ENCODE measurements at regions of chr17 and their contacts with region 1.

Region 1: GRCh38 chr17:47465165-47465564 is 65.7 kb upstream of the NPEPPS start:
- DNase-seq: no peak
- ATAC-seq: no peak
- H3K4me3 ChIP-seq: no peak overlapping the region
- H3K4me3 Mint-ChIP-seq: no peak overlapping the region
- H3K27ac ChIP-seq: no peak overlapping the region
- H3K27ac Mint-ChIP-seq: no peak overlapping the region
- H3K4me1 ChIP-seq: no peaks in the 10 kb centered on the region
- H3K4me1 Mint-ChIP-seq: no peaks in the 10 kb centered on the region
- H3K27me3 ChIP-seq: no peaks in the 10 kb centered on the region
- H3K27me3 Mint-ChIP-seq: no peaks in the 10 kb centered on the region
- CTCF ChIP-seq: no peak

Region 2: GRCh38 chr17:47335101-47335936 is 129.8 kb before region 1 on chr17:
- CTCF ChIA-PET with region 1: no interaction called
- POLR2A ChIA-PET with region 1: interaction called, 3 read pairs
- intact Hi-C with region 1: loop called in 1 of 2 experiments (anchors 10 kb)
- DNase-seq: no peak
- ATAC-seq: no peak
- H3K4me3 ChIP-seq: no peak overlapping the region
- H3K4me3 Mint-ChIP-seq: no peak overlapping the region
- H3K27ac ChIP-seq: no peak overlapping the region
- H3K27ac Mint-ChIP-seq: no peak overlapping the region
- H3K4me1 ChIP-seq: no peaks in the 10 kb centered on the region
- H3K4me1 Mint-ChIP-seq: no peaks in the 10 kb centered on the region
- H3K27me3 ChIP-seq: no peaks in the 10 kb centered on the region
- H3K27me3 Mint-ChIP-seq: no peaks in the 10 kb centered on the region
- CTCF ChIP-seq: no peak

Measured in CD4-positive, alpha-beta T cell (primary cell).